ENCODE measurements at regions of chr5 and their contacts with region 1.

Region 1: GRCh38 chr5:132963175-132964104 is at the start of gene AFF4:
- DNase-seq: peak; percentile 99
- ATAC-seq: peak; percentile 98
- total RNA-seq, gene AFF4: 29.2 TPM

Region 2: DNA sequence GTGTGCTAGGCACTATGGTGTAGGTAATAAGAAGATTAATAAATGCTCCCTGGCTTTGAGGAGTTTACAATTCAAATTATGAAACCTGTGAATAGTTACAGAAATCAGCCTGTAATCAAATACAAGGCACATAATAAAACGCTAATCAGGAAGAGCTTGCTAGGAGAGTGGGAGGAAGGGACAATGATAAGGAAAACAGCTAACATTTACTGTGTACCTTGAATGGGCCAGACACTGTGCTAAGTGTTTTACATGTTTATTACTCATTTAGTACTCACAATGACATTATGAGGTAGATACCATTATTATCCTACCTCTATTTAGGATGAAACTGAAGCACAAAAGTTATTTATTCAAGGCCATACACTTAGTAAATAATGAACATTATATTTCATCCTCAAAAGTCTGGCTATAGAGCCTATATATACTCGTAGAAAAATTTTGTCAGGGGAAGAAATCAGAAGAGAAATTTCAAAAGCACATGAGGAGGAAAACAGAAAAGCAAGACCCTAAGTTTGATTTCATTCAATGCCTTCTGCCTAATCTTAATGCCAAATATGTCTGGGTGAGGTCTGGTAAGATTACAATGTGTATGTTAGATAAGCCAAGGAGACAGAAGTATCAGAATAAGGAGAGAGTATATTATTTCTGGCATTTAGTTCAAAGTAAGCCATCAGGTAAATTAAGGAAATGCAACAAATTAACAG is 35.9 kb before region 1 on chr5:
- intact Hi-C with region 1: no loop called
- DNase-seq: no peak
- ATAC-seq: no peak

Region 3: GRCh38 chr5:133051580-133052332 is 88.3 kb after region 1 on chr5 and contains the start of gene HSPA4:
- intact Hi-C with region 1: loop called (anchors 2 kb)
- DNase-seq: peak; percentile 98
- ATAC-seq: peak; percentile 94
- total RNA-seq, gene HSPA4: 77.4 TPM

Region 4: GRCh38 chr5:133316427-133316826 is 353.0 kb after region 1 on chr5:
- intact Hi-C with region 1: no loop called
- DNase-seq: no peak
- ATAC-seq: no peak

Region 5: GRCh38 chr5:133618141-133618540 is 654.7 kb after region 1 on chr5:
- intact Hi-C with region 1: no loop called
- DNase-seq: no peak
- ATAC-seq: no peak